Activated naive CD4-positive, alpha-beta T cell treated with anti-CD3 and anti-CD28 coated beads for 36 hours (primary cell): ENCODE measurements at regions of chr3 and their contacts with region 1.

Region 1: DNA sequence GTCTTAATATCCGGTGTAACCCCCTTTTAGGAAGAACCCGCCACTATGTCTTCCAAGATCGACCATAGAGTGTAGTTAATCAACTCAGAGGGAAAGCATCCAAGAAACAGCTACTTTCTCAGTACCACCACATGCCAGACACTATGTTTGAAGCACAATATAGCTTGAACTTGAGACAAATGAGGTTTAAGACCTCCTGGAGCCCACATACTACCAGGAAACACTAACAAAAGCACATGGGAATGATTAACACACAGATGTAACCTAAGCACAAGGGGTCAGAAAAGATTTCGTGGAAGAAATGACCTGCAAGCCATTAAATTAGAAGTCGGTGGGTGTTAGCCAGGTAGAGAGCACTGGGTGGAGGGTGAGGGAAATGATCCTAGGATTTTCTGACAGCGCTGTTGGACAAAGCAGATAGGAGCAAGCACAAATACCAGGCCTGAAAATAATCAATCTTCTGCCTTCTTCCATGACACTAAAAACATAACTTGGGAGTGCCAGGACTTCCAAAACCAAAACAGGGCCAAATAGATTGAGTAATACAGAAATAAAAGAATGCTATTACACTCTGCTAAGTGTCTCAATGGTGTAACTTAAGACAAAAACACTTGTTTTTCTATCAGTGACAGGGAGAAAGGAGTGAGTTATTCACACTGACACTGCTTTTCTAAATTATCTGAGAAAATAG is 213.7 kb downstream of the FOXP1 start:
- DNase-seq: no peak
- H3K4me3 Mint-ChIP-seq: no peak overlapping the region
- H3K27ac Mint-ChIP-seq: no peak overlapping the region
- H3K4me1 Mint-ChIP-seq: peaks cover 74% of the 10 kb centered on the region
- H3K27me3 Mint-ChIP-seq: no peaks in the 10 kb centered on the region

Region 2: DNA sequence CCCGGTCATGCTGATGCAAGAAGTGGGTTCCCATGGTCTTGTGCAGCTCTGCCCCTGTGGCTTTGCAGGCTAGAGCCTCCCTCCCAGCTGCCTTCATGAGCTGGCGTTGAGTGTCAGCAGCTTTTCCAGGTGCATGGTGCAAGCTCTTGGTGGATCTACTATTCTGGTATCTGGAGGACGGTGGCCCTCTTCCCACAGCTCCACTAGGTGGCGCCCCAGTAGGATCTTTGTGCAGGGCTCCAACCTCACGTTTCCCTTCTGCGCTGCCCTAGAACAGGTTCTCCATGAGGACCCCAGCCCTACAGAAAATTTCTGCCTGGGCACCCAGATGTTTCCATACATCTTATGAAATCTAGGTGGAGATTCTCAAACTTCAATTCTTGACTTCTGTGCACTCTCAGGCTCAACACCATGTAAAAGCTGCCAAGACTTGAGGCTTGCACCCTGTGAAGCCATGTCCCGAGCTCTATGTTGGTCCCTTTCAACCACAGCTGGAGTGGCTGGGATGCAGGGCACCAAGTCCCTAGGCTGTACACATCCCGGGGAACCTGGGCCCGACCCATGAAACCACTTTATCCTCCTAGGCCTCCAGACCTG is 819.0 kb before region 1 on chr3:
- CTCF ChIA-PET with region 1: no interaction called
- intact Hi-C with region 1: loop called (anchors 10 kb)
- DNase-seq: peak; percentile 88
- H3K4me3 Mint-ChIP-seq: no peak overlapping the region
- H3K27ac Mint-ChIP-seq: no peak overlapping the region
- H3K4me1 Mint-ChIP-seq: no peaks in the 10 kb centered on the region
- H3K27me3 Mint-ChIP-seq: no peaks in the 10 kb centered on the region

Region 3: GRCh38 chr3:71219744-71220638 is 149.9 kb before region 1 on chr3:
- CTCF ChIA-PET with region 1: no interaction called
- intact Hi-C with region 1: no loop called
- DNase-seq: peak; percentile 84
- H3K4me3 Mint-ChIP-seq: no peak overlapping the region
- H3K27ac Mint-ChIP-seq: peak overlapping the region; percentile 81
- H3K4me1 Mint-ChIP-seq: peaks cover 72% of the 10 kb centered on the region
- H3K27me3 Mint-ChIP-seq: no peaks in the 10 kb centered on the region